Transverse colon (tissue), 4 donors: ENCODE measurements at regions of chr15 and their contacts with region 1.

Region 1: DNA sequence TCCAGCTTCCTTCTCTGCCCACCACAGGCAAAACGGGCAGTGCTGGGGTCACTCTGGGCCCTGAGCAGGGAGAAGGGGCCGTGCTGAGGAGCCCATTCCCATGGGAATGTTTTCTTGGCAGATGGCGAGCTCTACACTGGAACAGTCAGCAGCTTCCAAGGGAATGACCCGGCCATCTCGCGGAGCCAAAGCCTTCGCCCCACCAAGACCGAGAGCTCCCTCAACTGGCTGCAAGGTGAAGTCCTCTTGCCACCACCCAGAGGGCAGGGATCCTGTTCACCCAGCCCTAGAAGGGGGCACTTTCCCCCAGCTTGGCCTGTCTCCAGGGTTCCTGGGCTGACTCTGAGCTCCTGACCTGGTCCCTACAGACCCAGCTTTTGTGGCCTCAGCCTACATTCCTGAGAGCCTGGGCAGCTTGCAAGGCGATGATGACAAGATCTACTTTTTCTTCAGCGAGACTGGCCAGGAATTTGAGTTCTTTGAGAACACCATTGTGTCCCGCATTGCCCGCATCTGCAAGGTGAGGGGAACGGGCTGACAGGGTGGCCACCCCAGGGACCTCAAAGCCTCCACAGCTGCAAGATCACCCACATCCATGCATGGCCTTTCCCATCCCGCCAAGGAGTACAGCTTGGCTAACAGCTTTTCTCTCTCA is 12.4 kb downstream of the CIB1 start:
- DNase-seq: peak; percentile 80
- H3K4me3 ChIP-seq: no peak overlapping the region
- H3K27ac ChIP-seq: peak overlapping the region; percentile 40 to 77 (median 53)
- H3K4me1 ChIP-seq: peaks cover 3 to 14% (median 6%) of the 10 kb centered on the region in 4 donors
- H3K27me3 ChIP-seq: no peaks in the 10 kb centered on the region
- CTCF ChIP-seq: peak; percentile 71 to 85 (median 75)
- EP300 ChIP-seq: no peak
- POLR2A ChIP-seq: no peak

Region 2: DNA sequence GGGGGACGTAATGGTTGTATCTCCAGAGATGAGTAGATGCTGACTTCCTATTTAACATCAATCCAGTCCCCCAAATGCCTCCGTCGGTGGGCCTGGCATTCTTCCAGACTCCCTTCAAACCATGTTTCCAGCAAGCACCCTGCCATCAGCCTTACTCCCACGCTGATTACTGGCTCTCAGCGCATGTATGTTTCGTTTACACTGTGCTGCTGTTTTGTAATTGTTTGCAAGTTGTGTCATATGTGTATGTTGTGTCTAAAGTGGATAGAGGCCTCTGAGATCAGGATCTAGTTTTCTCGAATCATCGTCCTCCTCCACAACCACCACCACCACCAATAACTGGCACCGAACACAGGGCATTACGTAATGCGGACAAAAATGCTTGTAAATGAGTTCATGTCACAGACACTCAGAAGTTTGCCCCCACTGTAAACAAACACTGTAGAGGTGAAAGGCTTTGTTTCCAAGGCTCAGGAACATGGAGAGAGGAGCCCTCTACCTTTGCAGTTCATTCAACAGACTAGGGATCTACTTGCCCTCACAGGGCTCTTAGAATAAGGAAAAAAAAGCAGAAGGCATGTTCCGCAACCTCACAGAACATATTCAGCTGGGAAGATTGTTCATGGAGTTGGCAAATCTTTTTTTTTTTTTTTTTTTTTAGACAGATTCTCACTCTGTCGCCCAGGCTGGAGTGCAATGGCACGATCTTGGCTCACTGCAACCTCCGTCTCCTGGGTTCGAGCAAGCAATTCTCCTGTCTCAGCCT is 66.3 kb before region 1 on chr15:
- in situ Hi-C with region 1: loop called in 2 of 4 experiments (anchors 5 to 10 kb)
- intact Hi-C with region 1: no loop called
- DNase-seq: peak; percentile 48
- H3K4me3 ChIP-seq: no peak overlapping the region
- H3K27ac ChIP-seq: peak overlapping the region; percentile 19 to 44 (median 33)
- H3K4me1 ChIP-seq: peaks cover 18 to 44% (median 26%) of the 10 kb centered on the region in 4 donors
- H3K27me3 ChIP-seq: no peaks in the 10 kb centered on the region
- CTCF ChIP-seq: no peak
- EP300 ChIP-seq: no peak
- POLR2A ChIP-seq: no peak

Region 3: DNA sequence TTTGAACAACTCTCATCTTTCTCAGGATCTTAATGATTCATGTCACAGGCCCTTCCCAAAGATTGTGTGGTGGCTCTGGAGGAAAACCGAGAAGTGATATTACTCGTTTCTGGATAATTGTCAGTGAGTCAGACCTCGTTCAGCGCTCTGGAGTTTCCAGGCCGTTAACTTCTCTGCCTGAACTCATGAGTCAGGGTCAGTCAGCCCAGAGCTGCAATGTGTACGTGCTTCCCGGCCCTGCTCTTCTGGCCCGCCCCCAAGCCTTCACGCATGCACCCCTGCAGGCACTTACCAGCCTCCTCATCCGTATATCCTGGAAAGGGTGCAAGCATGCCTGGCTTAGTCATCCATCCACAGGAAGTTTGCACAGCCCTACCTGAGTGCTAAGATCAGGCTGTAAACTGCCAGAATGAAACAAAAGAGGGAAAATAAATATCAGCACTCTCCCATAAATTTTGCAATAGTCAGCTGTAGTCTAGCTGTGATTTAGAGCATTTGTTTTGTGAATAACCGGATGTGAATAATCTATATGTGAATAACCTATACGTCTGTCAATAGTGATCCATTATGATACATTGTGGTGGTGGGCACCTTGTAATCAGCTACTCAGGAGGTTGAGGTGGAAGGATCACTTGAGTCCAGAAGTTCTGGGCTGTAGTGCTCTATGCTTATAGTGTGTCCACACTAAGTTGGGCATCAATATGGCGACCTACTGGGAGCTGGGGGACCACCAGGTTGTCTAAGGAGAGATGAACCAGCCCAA is 55.5 kb before region 1 on chr15:
- in situ Hi-C with region 1: loop called in 1 of 4 experiments (anchors 10 kb)
- intact Hi-C with region 1: no loop called
- DNase-seq: peak; percentile 92
- H3K4me3 ChIP-seq: no peak overlapping the region
- H3K27ac ChIP-seq: peak overlapping the region; percentile 82 to 89 (median 83)
- H3K4me1 ChIP-seq: peaks cover 16 to 67% (median 43%) of the 10 kb centered on the region in 4 donors
- H3K27me3 ChIP-seq: no peaks in the 10 kb centered on the region
- CTCF ChIP-seq: no peak
- EP300 ChIP-seq: peak; percentile 55
- POLR2A ChIP-seq: peak; percentile 18